ENCODE measurements at regions of chr12 and their contacts with region 1.

Region 1: DNA sequence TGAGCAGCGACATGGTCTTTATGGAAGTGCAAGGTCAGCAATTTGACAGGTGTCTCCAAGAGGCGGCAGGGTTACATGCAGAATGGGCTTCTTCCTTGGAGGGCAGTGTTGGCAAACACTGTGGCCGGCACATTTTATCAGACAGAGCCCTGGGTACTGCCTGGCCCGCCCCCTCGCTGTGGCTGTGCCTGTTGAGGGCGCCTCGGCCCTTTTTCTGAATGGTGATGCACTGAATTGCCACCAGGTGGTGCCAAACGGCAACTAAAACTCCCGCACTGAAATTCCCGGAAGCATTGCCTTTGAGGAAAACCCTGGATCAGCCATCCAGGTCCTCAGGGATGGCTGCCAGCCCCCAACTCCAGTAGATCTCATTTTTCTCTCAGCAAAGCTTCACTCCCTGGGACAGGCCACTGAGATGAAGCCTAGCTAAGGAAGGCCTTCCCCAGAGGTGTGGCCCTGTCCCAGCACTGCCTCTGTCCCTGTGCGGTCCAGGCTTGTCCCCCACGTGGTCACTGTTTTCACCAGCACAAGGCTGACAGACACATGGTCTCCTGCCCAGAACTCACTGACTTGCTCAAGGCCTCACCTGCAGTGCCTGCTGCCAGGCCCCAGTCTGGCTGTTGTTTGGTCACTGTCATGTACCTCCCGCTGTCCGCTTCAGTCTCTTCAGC is 73.6 kb downstream of the TESC start:
- DNase-seq: peak; percentile 84

Region 2: GRCh38 chr12:117119592-117120198 is 94.1 kb after region 1 on chr12:
- intact Hi-C with region 1: loop called (anchors 1 kb)
- DNase-seq: no peak

Region 3: GRCh38 chr12:117151195-117152031 is 125.8 kb after region 1 on chr12:
- intact Hi-C with region 1: loop called (anchors 1 kb)
- DNase-seq: peak; percentile 86

Region 4: GRCh38 chr12:117165342-117165741 is 139.7 kb after region 1 on chr12:
- intact Hi-C with region 1: no loop called
- DNase-seq: no peak

Region 5: GRCh38 chr12:117318591-117318990 is 293.0 kb after region 1 on chr12:
- intact Hi-C with region 1: no loop called
- DNase-seq: no peak